ENCODE measurements at regions of chr1 and their contacts with region 1.

Region 1: GRCh38 chr1:21244986-21245687 is 45.1 kb downstream of the ECE1 start:
- DNase-seq: no peak
- H3K4me3 ChIP-seq: no peak overlapping the region
- CTCF ChIP-seq: peak; percentile 41

Region 2: GRCh38 chr1:20821466-20821865 is 423.7 kb before region 1 on chr1:
- in situ Hi-C with region 1: no loop called
- DNase-seq: no peak
- H3K4me3 ChIP-seq: no peak overlapping the region
- CTCF ChIP-seq: no peak

Region 3: DNA sequence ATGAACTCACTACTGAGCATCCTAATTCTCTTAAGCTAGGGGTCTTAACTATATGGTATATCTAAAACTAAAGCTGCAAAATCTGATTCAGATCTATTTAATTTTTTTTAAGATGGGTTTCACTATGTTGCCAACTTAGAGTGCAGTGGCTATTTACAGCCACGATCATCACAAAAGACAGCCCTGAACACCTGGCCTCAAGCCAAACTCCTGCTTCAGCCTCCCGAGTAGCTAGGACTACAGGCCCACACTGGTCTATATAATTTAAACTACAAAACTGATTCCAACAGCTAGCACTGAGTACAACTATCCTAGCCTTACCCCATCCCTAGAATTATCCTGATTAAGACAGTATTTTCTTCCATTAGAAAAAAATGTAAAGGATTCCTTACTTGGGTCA is 105.5 kb before region 1 on chr1:
- in situ Hi-C with region 1: no loop called
- DNase-seq: no peak
- H3K4me3 ChIP-seq: no peak overlapping the region
- CTCF ChIP-seq: no peak

Region 4: GRCh38 chr1:21334214-21335087 is 89.3 kb after region 1 on chr1:
- in situ Hi-C with region 1: loop called (anchors 10 kb)
- DNase-seq: peak; percentile 82
- H3K4me3 ChIP-seq: peak overlapping the region; percentile 8
- CTCF ChIP-seq: peak; percentile 93

Region 5: GRCh38 chr1:21567241-21568005 is 322.3 kb after region 1 on chr1:
- in situ Hi-C with region 1: loop called (anchors 10 kb)
- DNase-seq: no peak
- H3K4me3 ChIP-seq: no peak overlapping the region
- CTCF ChIP-seq: no peak

Measured in astrocyte of the cerebellum (primary cell).